Posterior vena cava (tissue), 2 donors: ENCODE measurements at regions of chr21 and their contacts with region 1.

Region 1: GRCh38 chr21:17387030-17387617 is 125.7 kb upstream of the CXADR start:
- DNase-seq: no peak

Region 2: DNA sequence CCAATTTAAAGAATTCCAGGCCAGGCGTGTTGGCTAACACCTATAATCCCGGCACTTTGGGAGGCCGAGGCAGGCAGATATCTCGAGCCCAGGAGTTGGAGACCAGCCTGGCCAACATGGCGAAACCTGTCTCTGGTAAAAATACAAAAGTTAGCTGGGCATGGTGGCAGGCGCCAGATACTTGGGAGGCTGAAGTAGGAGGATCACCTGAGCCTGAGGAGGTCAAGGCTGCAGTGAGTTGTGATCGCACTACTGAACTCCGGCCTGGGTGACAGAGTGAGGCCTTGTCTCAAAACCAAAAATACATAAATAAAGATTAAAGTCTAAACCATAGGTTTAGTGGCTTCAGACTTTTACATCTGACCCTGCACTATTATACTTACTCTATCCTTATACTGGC is 193.2 kb after region 1 on chr21:
- intact Hi-C with region 1: loop called (anchors 5 kb)
- DNase-seq: no peak

Region 3: GRCh38 chr21:17925000-17925610 is 538.0 kb after region 1 on chr21:
- intact Hi-C with region 1: loop called in 1 of 2 experiments (anchors 10 kb)
- DNase-seq: no peak